Heart left ventricle (tissue), 16 donors: ENCODE measurements at regions of chr16 and their contacts with region 1.

Region 1: DNA sequence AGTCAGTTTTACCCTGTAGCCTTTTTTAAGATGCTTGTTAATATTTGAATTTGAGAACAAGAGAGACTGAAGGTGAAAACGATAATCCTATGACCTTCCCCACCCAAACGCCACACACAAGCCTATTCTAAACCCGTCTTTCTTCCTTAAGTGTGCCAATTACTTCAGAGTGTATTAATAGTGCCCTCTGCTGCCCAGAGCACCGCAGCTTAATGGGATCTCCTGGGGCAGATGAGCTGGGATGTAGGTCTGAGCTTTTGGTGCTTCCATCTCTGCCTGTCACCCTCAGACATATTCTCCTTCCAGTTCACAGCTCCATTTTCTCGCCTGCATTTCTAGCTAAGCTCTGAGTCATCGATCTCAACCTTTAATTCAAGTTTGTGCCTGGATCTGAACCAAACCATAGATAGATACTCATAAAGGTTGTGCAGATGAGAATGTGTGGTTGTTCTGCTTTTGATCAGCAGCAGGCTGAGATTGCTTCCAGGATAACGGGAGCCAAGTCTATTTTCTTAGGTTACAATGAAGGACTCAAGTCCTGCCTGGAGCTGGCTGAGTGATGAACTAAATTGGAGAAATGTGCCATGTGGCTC is 46.4 kb upstream of the CDH13 start:
- DNase-seq: peak in 1 of 5 donors; percentile 30
- ATAC-seq: peak; percentile 66 to 72 (median 69)
- H3K4me3 ChIP-seq: no peak overlapping the region
- H3K27ac ChIP-seq: no peak overlapping the region
- H3K4me1 ChIP-seq: peaks cover 0 to 11% (median 0%) of the 10 kb centered on the region in 12 donors
- H3K27me3 ChIP-seq: no peaks in the 10 kb centered on the region
- CTCF ChIP-seq: peak; percentile 9 to 59 (median 44)
- POLR2A ChIP-seq: no peak

Region 2: GRCh38 chr16:82456683-82457082 is 123.7 kb before region 1 on chr16:
- intact Hi-C with region 1: loop called in 3 of 10 experiments (anchors 10 kb)
- DNase-seq: peak in 3 of 5 donors; percentile 10 to 42 (median 37)
- ATAC-seq: peak in 3 of 4 donors; percentile 63 to 81 (median 80)
- H3K4me3 ChIP-seq: no peak overlapping the region
- H3K27ac ChIP-seq: no peak overlapping the region
- H3K4me1 ChIP-seq: no peaks in the 10 kb centered on the region
- H3K27me3 ChIP-seq: peaks cover 0 to 5% (median 0%) of the 10 kb centered on the region in 9 donors
- CTCF ChIP-seq: peak; percentile 44 to 78 (median 67)
- POLR2A ChIP-seq: no peak

Region 3: GRCh38 chr16:82621796-82622195 is 41.4 kb after region 1 on chr16:
- intact Hi-C with region 1: no loop called
- DNase-seq: no peak
- ATAC-seq: peak in 3 of 4 donors; percentile 45 to 67 (median 65)
- H3K4me3 ChIP-seq: no peak overlapping the region
- H3K27ac ChIP-seq: no peak overlapping the region
- H3K4me1 ChIP-seq: peaks cover 0 to 21% (median 8%) of the 10 kb centered on the region in 12 donors
- H3K27me3 ChIP-seq: peaks cover 0 to 8% (median 0%) of the 10 kb centered on the region in 9 donors
- CTCF ChIP-seq: peak in 7 of 12 donors; percentile 10 to 38 (median 28)
- POLR2A ChIP-seq: no peak

Region 4: DNA sequence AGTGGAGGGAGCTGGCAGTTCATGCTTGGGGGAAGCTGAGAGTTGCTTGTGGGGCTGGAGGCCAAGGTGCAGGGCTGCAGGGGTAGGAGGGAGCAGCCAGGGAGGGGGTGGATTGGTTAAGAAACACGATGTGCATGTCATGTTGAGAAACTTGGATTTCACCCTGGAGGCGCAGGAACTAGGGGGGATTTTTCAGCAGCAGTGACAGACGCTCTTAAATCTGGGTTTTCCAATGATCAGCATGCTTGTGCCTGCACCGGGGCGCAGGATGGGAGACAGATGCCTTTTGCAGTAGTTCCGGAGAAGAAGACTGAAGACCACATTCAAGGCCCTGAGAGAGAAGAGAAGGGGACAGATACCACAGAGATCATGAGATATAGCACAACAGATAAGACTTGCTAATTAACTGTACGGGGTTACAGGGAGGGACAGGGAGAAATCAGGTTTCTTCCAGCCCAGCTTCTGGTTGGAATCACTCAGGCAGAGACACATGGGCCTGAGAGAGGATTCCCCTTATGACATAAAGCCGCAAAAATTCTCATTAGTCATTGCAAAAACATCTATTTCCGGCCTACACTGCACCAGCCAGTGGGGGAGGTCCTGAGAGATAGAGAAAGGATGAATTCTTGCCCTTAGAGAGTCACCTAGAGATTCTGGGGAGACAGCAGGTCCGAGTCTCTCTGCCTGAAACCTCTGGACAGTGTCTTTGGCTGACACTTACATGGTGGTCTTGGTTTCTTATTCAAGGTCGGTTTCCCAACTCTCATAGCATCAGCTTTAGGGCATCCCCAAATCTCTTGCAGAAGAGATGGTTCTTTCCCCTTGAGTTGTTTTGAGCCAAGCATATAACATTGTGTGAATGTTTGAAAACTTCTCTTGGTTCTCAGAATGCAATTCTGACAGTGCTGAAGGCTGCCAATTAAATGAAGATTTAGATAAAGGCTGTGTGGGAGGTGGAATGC is 73.4 kb after region 1 on chr16:
- intact Hi-C with region 1: no loop called
- DNase-seq: no peak
- ATAC-seq: peak in 3 of 4 donors; percentile 64 to 84 (median 82)
- H3K4me3 ChIP-seq: no peak overlapping the region
- H3K27ac ChIP-seq: peak overlapping the region in 9 of 12 donors; percentile 5 to 81 (median 41)
- H3K4me1 ChIP-seq: peaks cover 6 to 66% (median 43%) of the 10 kb centered on the region in 12 donors
- H3K27me3 ChIP-seq: no peaks in the 10 kb centered on the region
- CTCF ChIP-seq: no peak
- POLR2A ChIP-seq: no peak